Activated T-helper 2 cell treated with anti-CD3 and anti-CD28 coated beads, Interferon-gamma antibody, Interleukin-2, Interleukin-4, amounts not matched to agents 10 μg/mL and 5 μg/mL and 100 μg/mL, durations not matched to agents 14 hours and 24 hours and 36 hours (primary cell): ENCODE measurements at regions of chr10 and their contacts with region 1.

Region 1: GRCh38 chr10:125343118-125343925 is 183.0 kb upstream of the CTBP2 start:
- DNase-seq: no peak
- H3K4me3 Mint-ChIP-seq: no peak overlapping the region
- H3K27ac Mint-ChIP-seq: no peak overlapping the region
- H3K4me1 Mint-ChIP-seq: no peaks in the 10 kb centered on the region
- H3K27me3 Mint-ChIP-seq: no peaks in the 10 kb centered on the region

Region 2: DNA sequence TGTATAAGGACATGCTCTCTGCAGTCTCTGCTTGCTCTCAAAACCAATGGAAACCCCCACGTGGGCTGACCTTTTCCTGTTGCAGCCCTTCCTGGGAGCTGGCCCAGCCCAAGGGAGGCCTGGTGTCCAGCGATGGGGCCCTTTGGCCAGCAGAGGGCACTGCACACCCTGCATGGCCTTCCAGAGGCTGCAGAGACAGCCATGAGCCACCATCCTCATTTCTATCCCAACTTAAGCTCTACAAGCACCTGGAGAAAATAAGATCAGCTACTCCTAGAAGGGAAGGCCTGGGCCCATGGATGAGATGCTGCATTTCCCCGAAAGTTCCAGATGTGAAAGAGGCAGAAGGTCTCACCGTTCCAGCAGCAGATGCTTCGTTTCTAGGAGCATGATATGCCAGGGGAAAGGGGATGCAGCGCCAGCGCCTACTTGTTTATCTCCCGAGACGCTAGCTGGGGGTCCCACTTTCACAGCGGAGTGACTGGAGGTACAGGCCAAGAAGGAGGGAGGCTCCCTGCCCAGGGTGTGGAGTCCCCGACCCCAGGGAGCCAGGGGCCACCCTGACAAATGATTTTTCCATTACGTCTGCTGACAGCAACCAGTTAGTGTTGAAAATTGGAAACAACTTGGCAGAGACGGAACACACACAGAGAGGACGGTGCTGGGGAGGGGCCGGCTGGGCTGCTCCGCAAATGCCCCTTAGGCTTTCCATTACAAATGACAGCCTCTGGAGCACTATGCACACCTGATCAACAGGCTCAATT is 295.0 kb before region 1 on chr10:
- intact Hi-C with region 1: loop called (anchors 10 kb)
- DNase-seq: peak; percentile 37
- H3K4me3 Mint-ChIP-seq: no peak overlapping the region
- H3K27ac Mint-ChIP-seq: no peak overlapping the region
- H3K4me1 Mint-ChIP-seq: peaks cover 2% of the 10 kb centered on the region
- H3K27me3 Mint-ChIP-seq: peaks cover 6% of the 10 kb centered on the region